K562 (cell line): ENCODE measurements at regions of chr11 and their contacts with region 1.

Region 1: DNA sequence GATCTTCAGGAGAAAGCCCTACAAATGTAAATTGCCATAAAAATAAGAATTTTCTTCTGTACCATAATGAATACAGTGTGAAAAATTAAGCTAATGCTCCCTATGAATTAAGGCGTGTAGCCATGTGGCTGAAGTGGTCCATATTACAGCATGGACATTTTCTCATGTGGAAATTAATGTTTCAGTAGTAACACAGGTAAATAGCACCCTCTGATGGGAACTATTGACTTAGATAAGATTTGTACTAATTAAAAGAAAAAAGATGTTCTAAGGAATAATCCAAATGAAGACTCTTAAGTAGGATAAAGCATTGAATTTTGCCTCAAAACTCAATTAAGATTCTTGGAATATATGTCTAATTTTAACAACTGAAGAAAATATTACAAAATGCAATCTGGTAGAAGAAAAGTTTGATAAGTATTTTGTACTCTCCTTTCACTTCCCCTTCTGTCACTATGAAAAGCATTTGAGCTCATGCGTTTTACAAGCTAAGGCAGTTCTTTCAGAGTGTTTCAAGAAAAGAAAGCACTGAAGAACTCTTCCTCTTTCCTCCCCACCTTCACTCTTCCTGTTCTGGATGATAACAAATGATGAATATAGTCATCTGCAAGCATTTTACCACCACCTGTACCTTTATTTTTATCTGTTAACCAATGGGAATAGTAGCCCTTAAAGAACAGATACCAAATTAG is 9.9 kb upstream of the OR8D2 start:
- DNase-seq: no peak
- ATAC-seq: no peak
- H3K4me3 ChIP-seq: no peak overlapping the region
- H3K27ac ChIP-seq: no peak overlapping the region
- H3K4me1 ChIP-seq: no peaks in the 10 kb centered on the region
- H3K27me3 ChIP-seq: no peaks in the 10 kb centered on the region
- CTCF ChIP-seq: no peak; a peak in 1 of 6 replicates
- EP300 ChIP-seq: no peak
- POLR2A ChIP-seq: no peak
- RAD21 ChIP-seq: peak in 1 of 2 experiments; percentile 46; a peak in 2 of 4 replicates

Region 2: GRCh38 chr11:124050748-124051147 is 279.2 kb before region 1 on chr11:
- CTCF ChIA-PET with region 1: no interaction called
- POLR2A ChIA-PET with region 1: no interaction called
- in situ Hi-C with region 1: no loop called
- intact Hi-C with region 1: no loop called
- DNase-seq: no peak
- ATAC-seq: no peak
- H3K4me3 ChIP-seq: no peak overlapping the region
- H3K27ac ChIP-seq: no peak overlapping the region
- H3K4me1 ChIP-seq: no peaks in the 10 kb centered on the region
- H3K27me3 ChIP-seq: peaks cover 4 to 13% of the 10 kb centered on the region in 2 experiments; a peak in 3 of 5 replicates
- CTCF ChIP-seq: no peak
- EP300 ChIP-seq: no peak
- POLR2A ChIP-seq: no peak
- RAD21 ChIP-seq: no peak

Region 3: GRCh38 chr11:124108156-124108555 is 221.8 kb before region 1 on chr11:
- CTCF ChIA-PET with region 1: interaction called, 3 read pairs
- POLR2A ChIA-PET with region 1: no interaction called
- in situ Hi-C with region 1: no loop called
- intact Hi-C with region 1: loop called (anchors 2 kb)
- DNase-seq: peak; percentile 29 to 76 (median 46)
- ATAC-seq: peak; percentile 93
- H3K4me3 ChIP-seq: no peak overlapping the region
- H3K27ac ChIP-seq: no peak overlapping the region
- H3K4me1 ChIP-seq: no peaks in the 10 kb centered on the region; a peak in 1 of 5 replicates
- H3K27me3 ChIP-seq: no peaks in the 10 kb centered on the region
- CTCF ChIP-seq: peak; percentile 55 to 65 (median 62)
- EP300 ChIP-seq: 0 out of 2 replicates have a peak, but pooled peaks have one; percentile 15
- POLR2A ChIP-seq: no peak
- RAD21 ChIP-seq: peak; percentile 74 to 90

Region 4: GRCh38 chr11:124256076-124256475 is 73.9 kb before region 1 on chr11 and contains the start of gene OR8G5:
- CTCF ChIA-PET with region 1: no interaction called
- POLR2A ChIA-PET with region 1: no interaction called
- in situ Hi-C with region 1: no loop called
- intact Hi-C with region 1: no loop called
- DNase-seq: no peak
- ATAC-seq: no peak
- H3K4me3 ChIP-seq: no peak within 1 kb of the TSS
- H3K27ac ChIP-seq: no peak within 1 kb of the TSS
- H3K4me1 ChIP-seq: peaks cover 0 to 4% of the 10 kb centered on the region in 2 experiments; a peak in 2 of 5 replicates
- H3K27me3 ChIP-seq: no peaks in the 10 kb centered on the region
- CTCF ChIP-seq: no peak
- EP300 ChIP-seq: no peak
- POLR2A ChIP-seq: no peak
- RAD21 ChIP-seq: no peak
- polyA plus RNA-seq, gene OR8G5: 0.98 to 1.2 TPM

Region 5: GRCh38 chr11:124380585-124380984 is 50.7 kb after region 1 on chr11:
- CTCF ChIA-PET with region 1: no interaction called
- POLR2A ChIA-PET with region 1: no interaction called
- in situ Hi-C with region 1: no loop called
- intact Hi-C with region 1: loop called (anchors 10 kb)
- DNase-seq: peak in 1 of 4 experiments; percentile 38
- ATAC-seq: peak; percentile 80
- H3K4me3 ChIP-seq: no peak overlapping the region
- H3K27ac ChIP-seq: no peak overlapping the region; the same call in 2 of the 3 replicates
- H3K4me1 ChIP-seq: peaks cover 0 to 2% of the 10 kb centered on the region in 2 experiments; a peak in 2 of 5 replicates
- H3K27me3 ChIP-seq: no peaks in the 10 kb centered on the region
- CTCF ChIP-seq: no peak
- EP300 ChIP-seq: no peak
- POLR2A ChIP-seq: no peak
- RAD21 ChIP-seq: no peak